GM12878 (cell line): ENCODE measurements at regions of chr18 and their contacts with region 1.

Region 1: GRCh38 chr18:57569133-57569532 is 17.4 kb downstream of the FECH start:
- DNase-seq: no peak
- ATAC-seq: peak; percentile 50; the same call in 1 of the 3 replicates
- H3K4me3 ChIP-seq: no peak overlapping the region
- H3K27ac ChIP-seq: no peak overlapping the region
- H3K4me1 ChIP-seq: no peaks in the 10 kb centered on the region
- H3K27me3 ChIP-seq: no peaks in the 10 kb centered on the region
- CTCF ChIP-seq: no peak
- EP300 ChIP-seq: no peak
- POLR2A ChIP-seq: no peak
- RAD21 ChIP-seq: no peak

Region 2: GRCh38 chr18:56743115-56743514 is 826.0 kb before region 1 on chr18:
- CTCF ChIA-PET with region 1: no interaction called
- POLR2A ChIA-PET with region 1: no interaction called
- RAD21 ChIA-PET with region 1: no interaction called
- SMC1A ChIA-PET with region 1: no interaction called
- in situ Hi-C with region 1: loop called (anchors 5 kb)
- intact Hi-C with region 1: no loop called
- DNase-seq: no peak
- ATAC-seq: no peak
- H3K4me3 ChIP-seq: no peak overlapping the region
- H3K27ac ChIP-seq: no peak overlapping the region
- H3K4me1 ChIP-seq: no peaks in the 10 kb centered on the region
- H3K27me3 ChIP-seq: no peaks in the 10 kb centered on the region
- CTCF ChIP-seq: no peak
- EP300 ChIP-seq: no peak
- POLR2A ChIP-seq: no peak
- RAD21 ChIP-seq: no peak

Region 3: GRCh38 chr18:57581302-57581934 is 12.3 kb after region 1 on chr18:
- CTCF ChIA-PET with region 1: interaction called, 6 read pairs
- POLR2A ChIA-PET with region 1: no interaction called
- RAD21 ChIA-PET with region 1: no interaction called
- SMC1A ChIA-PET with region 1: interaction called, 10 read pairs
- in situ Hi-C with region 1: no loop called
- intact Hi-C with region 1: no loop called
- DNase-seq: peak; percentile 42
- ATAC-seq: peak; percentile 93
- H3K4me3 ChIP-seq: no peak overlapping the region; the same call in 1 of the 2 replicates
- H3K27ac ChIP-seq: 0 out of 2 replicates have a peak overlapping the region, but pooled peaks have one; percentile 5
- H3K4me1 ChIP-seq: peaks cover 28% of the 10 kb centered on the region
- H3K27me3 ChIP-seq: no peaks in the 10 kb centered on the region
- CTCF ChIP-seq: no peak
- EP300 ChIP-seq: no peak
- POLR2A ChIP-seq: no peak; the same call in 1 of the 2 replicates
- RAD21 ChIP-seq: no peak